RWPE1 (cell line): ENCODE measurements at regions of chr19 and their contacts with region 1.

Region 1: GRCh38 chr19:45079063-45079910 is at the start of gene GEMIN7:
- DNase-seq: peak; percentile 67
- H3K27ac ChIP-seq: peak within 1 kb of the TSS; percentile 90
- CTCF ChIP-seq: peak; percentile 25

Region 2: DNA sequence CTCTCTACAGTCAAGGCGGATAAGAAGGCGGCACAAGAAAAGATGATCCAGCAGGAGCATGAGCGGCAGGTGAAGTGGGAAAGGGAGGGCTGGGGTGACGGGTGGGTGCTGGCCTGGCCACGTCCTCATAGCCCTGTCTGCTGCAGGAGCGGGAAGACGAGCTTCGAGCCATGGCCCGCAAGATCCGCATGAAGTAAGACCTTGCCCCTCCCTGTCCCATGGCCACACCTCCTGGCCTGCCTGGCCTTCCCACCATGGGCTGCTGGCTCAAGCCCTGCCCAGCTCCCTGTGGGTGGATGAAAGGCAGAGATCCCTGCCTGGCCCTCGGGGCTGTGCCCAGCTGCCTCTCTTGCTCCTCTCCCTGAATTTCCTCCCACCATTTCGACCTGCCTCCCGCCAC is 10.2 kb before region 1 on chr19:
- CTCF ChIA-PET with region 1: no interaction called
- POLR2A ChIA-PET with region 1: interaction called, 10 read pairs
- DNase-seq: peak; percentile 73
- H3K27ac ChIP-seq: peak overlapping the region; percentile 90
- CTCF ChIP-seq: no peak